CD8-positive, alpha-beta T cell (primary cell): ENCODE measurements at regions of chr6 and their contacts with region 1.

Region 1: DNA sequence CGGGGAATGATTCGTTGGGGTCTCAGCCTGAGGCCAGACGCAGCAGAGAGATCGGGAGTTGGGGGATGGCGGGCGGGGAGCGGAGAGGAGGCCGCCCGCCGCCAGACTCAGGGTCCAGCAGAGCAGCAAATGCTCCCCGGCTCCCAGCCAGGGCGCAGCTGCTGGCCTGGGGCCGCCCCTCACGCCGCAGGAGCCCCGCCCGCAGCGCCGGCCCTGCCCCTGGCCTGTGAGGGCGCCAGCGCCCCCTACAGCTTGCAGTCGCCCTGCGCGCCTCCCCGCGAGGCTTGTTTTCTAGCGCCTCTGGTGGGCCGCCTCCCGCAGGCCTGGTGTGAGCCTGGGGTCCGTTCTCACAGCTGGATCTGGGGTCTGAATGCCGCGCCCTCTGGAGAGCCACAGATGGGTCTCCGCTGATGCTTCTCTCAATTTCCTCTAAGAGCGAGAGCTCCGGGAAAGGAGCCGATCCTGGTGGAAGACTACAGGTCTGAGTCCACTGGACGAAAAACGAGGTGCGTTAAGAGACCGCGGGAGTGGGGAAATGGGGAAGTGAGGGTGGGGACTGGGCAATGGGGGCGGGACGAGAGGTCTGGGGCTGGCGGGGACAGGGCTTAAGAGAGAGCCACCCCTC is 29.9 kb downstream of the TRIM38 start:
- DNase-seq: peak; percentile 87 to 97 (median 94)
- ATAC-seq: peak; percentile 96
- H3K4me3 ChIP-seq: peak overlapping the region; percentile 62 to 85
- H3K4me3 Mint-ChIP-seq: peak overlapping the region; percentile 96
- H3K27ac ChIP-seq: peak overlapping the region; percentile 63 to 81
- H3K27ac Mint-ChIP-seq: peak overlapping the region; percentile 96
- H3K4me1 ChIP-seq: peaks cover 3% of the 10 kb centered on the region
- H3K4me1 Mint-ChIP-seq: peaks cover 32% of the 10 kb centered on the region
- H3K27me3 ChIP-seq: no peaks in the 10 kb centered on the region
- H3K27me3 Mint-ChIP-seq: no peaks in the 10 kb centered on the region
- CTCF ChIP-seq: peak; percentile 100

Region 2: DNA sequence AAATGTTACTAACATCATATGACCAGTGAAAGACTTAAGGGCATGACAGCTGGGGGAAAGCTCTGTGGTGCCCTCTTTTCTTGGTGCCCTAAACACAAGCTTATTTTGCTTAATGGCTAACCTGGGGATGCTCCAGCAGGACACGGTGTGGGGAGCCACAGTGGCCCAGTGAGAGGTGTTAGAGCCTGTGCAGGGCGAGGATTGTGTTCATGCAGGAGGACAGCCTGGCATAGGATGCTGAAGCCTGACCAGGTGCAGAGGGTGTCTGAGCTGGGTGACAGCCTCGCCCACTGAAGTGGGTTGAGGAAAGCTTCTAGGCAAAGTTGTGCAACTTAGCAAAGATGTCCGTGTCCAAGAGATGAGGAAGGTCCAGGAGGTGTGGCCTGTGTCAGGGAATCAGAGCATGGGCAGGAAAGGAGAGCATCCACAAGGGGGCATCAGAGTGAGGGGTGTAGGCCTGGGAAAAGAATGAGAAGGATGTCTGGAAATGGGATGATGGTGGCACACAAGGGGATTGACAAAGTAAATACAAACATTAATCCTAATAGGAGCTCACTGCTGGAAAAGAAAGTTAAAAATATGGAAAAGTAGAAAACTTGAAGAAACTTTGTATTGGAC is 204.1 kb before region 1 on chr6:
- CTCF ChIA-PET with region 1: interaction called, 25 read pairs
- POLR2A ChIA-PET with region 1: no interaction called
- intact Hi-C with region 1: loop called (anchors 1 kb)
- DNase-seq: peak in 7 of 9 experiments; percentile 11 to 63 (median 41)
- ATAC-seq: peak; percentile 52
- H3K4me3 ChIP-seq: no peak overlapping the region
- H3K4me3 Mint-ChIP-seq: no peak overlapping the region
- H3K27ac ChIP-seq: no peak overlapping the region
- H3K27ac Mint-ChIP-seq: no peak overlapping the region
- H3K4me1 ChIP-seq: no peaks in the 10 kb centered on the region
- H3K4me1 Mint-ChIP-seq: no peaks in the 10 kb centered on the region
- H3K27me3 ChIP-seq: no peaks in the 10 kb centered on the region
- H3K27me3 Mint-ChIP-seq: peaks cover 3% of the 10 kb centered on the region
- CTCF ChIP-seq: peak; percentile 37

Region 3: GRCh38 chr6:25962149-25963127 is 30.1 kb before region 1 on chr6 and contains the start of gene TRIM38:
- CTCF ChIA-PET with region 1: interaction called, 6 read pairs
- POLR2A ChIA-PET with region 1: interaction called, 14 read pairs
- intact Hi-C with region 1: loop called (anchors 1 to 2 kb)
- DNase-seq: peak; percentile 50 to 95 (median 77)
- ATAC-seq: peak; percentile 86
- H3K4me3 ChIP-seq: peak within 1 kb of the TSS; percentile 76 to 86
- H3K4me3 Mint-ChIP-seq: peak within 1 kb of the TSS; percentile 95
- H3K27ac ChIP-seq: peak within 1 kb of the TSS; percentile 91 to 95
- H3K27ac Mint-ChIP-seq: peak within 1 kb of the TSS; percentile 98
- H3K4me1 ChIP-seq: peaks cover 64% of the 10 kb centered on the region
- H3K4me1 Mint-ChIP-seq: peaks cover 81% of the 10 kb centered on the region
- H3K27me3 ChIP-seq: no peaks in the 10 kb centered on the region
- H3K27me3 Mint-ChIP-seq: no peaks in the 10 kb centered on the region
- CTCF ChIP-seq: no peak
- total RNA-seq, gene TRIM38: 13.2 to 13.6 TPM

Region 4: GRCh38 chr6:25981568-25982263 is 10.8 kb before region 1 on chr6:
- CTCF ChIA-PET with region 1: interaction called, 29 read pairs
- POLR2A ChIA-PET with region 1: interaction called, 3 read pairs
- intact Hi-C with region 1: no loop called
- DNase-seq: no peak
- ATAC-seq: no peak
- H3K4me3 ChIP-seq: no peak overlapping the region
- H3K4me3 Mint-ChIP-seq: no peak overlapping the region
- H3K27ac ChIP-seq: no peak overlapping the region
- H3K27ac Mint-ChIP-seq: peak overlapping the region; percentile 28
- H3K4me1 ChIP-seq: no peaks in the 10 kb centered on the region
- H3K4me1 Mint-ChIP-seq: peaks cover 15% of the 10 kb centered on the region
- H3K27me3 ChIP-seq: no peaks in the 10 kb centered on the region
- H3K27me3 Mint-ChIP-seq: no peaks in the 10 kb centered on the region
- CTCF ChIP-seq: no peak

Region 5: DNA sequence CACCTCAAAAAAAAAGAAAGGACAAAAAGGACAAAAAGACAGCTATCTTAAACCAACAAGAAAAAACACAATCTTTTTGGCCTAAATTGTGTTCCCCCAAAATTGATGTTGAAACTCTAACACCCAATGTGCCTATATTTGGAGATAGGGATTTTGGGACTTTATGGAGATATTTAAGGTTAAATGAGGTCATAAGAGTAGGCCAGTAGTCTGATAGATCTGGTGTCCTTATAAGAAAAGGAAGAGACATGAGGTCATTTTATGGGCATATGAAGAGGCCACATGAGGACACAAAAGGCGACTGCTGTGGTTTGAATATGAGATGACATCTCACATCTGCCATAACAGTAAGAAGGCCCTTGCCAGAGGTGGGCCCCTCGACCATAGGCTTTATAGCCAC is 19.5 kb after region 1 on chr6:
- CTCF ChIA-PET with region 1: interaction called, 43 read pairs
- POLR2A ChIA-PET with region 1: interaction called, 14 read pairs
- intact Hi-C with region 1: no loop called
- DNase-seq: no peak
- ATAC-seq: no peak
- H3K4me3 ChIP-seq: no peak overlapping the region
- H3K4me3 Mint-ChIP-seq: no peak overlapping the region
- H3K27ac ChIP-seq: no peak overlapping the region
- H3K27ac Mint-ChIP-seq: no peak overlapping the region
- H3K4me1 ChIP-seq: no peaks in the 10 kb centered on the region
- H3K4me1 Mint-ChIP-seq: peaks cover under 1% of the 10 kb centered on the region
- H3K27me3 ChIP-seq: no peaks in the 10 kb centered on the region
- H3K27me3 Mint-ChIP-seq: no peaks in the 10 kb centered on the region
- CTCF ChIP-seq: no peak

Region 6: GRCh38 chr6:26097268-26097875 is 104.8 kb after region 1 on chr6:
- CTCF ChIA-PET with region 1: no interaction called
- POLR2A ChIA-PET with region 1: no interaction called
- intact Hi-C with region 1: no loop called
- DNase-seq: peak; percentile 22 to 84 (median 71)
- ATAC-seq: peak; percentile 84
- H3K4me3 ChIP-seq: no peak overlapping the region
- H3K4me3 Mint-ChIP-seq: no peak overlapping the region
- H3K27ac ChIP-seq: no peak overlapping the region
- H3K27ac Mint-ChIP-seq: no peak overlapping the region
- H3K4me1 ChIP-seq: no peaks in the 10 kb centered on the region
- H3K4me1 Mint-ChIP-seq: peaks cover 5% of the 10 kb centered on the region
- H3K27me3 ChIP-seq: no peaks in the 10 kb centered on the region
- H3K27me3 Mint-ChIP-seq: no peaks in the 10 kb centered on the region
- CTCF ChIP-seq: peak; percentile 91